ENCODE measurements at regions of chr2 and their contacts with region 1.

Region 1: GRCh38 chr2:237864940-237865622 is 5.7 kb downstream of the RAMP1 start:
- DNase-seq: peak; percentile 70
- ATAC-seq: peak; percentile 55
- H3K4me3 ChIP-seq: no peak overlapping the region
- H3K27ac ChIP-seq: peak overlapping the region; percentile 79
- H3K4me1 ChIP-seq: peaks cover 21% of the 10 kb centered on the region
- H3K27me3 ChIP-seq: no peaks in the 10 kb centered on the region
- CTCF ChIP-seq: no peak
- POLR2A ChIP-seq: no peak
- RAD21 ChIP-seq: no peak

Region 2: DNA sequence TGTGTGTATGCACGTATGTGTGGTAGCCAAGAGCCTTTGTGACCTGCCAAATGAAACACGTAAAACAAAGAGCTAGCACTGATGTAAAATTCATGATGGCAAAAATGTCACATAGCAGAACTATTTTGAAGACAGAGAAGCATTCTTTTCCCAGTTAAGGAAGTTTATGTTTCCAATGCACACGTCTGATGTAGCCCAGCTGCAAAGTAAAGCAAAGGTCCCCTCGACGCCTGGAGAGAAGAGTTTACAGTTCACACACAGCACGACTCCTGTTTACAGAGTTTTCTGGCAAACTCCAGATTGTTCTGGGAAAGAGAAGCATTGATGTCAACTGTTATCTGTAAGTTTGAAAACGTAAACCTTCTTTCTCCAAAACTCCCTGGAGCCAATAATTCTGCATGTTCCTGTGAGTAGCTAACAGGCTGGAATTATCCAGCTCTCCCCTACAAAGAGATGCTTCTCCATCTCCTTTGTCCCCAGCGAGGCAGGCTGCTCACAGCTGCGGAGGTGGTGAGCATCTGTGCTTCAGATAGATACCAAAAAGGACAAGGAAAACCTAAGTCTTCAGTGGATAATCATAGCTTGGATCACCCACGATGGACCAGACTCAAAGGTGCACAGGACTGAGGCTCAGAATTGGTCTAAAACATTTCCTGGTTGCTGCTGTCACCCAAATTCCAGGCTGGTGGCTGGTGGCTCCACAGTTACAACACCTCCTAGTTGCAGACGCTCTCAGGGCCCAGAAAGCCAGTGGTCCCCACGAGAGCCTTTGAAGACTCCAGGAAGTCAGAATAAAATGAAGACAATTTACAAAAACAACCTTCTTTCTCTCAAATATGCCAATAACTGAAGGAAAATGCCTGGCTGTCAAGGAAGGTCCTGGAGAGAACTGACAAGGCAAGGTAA is 538.6 kb before region 1 on chr2:
- CTCF ChIA-PET with region 1: no interaction called
- POLR2A ChIA-PET with region 1: no interaction called
- dilution Hi-C with region 1: no loop called
- in situ Hi-C with region 1: no loop called
- intact Hi-C with region 1: no loop called
- DNase-seq: peak; percentile 87
- ATAC-seq: peak; percentile 18
- H3K4me3 ChIP-seq: no peak overlapping the region
- H3K27ac ChIP-seq: peak overlapping the region; percentile 88
- H3K4me1 ChIP-seq: peaks cover 33% of the 10 kb centered on the region
- H3K27me3 ChIP-seq: no peaks in the 10 kb centered on the region
- CTCF ChIP-seq: no peak
- POLR2A ChIP-seq: no peak
- RAD21 ChIP-seq: no peak

Region 3: GRCh38 chr2:238282861-238283738 is 418.0 kb after region 1 on chr2:
- CTCF ChIA-PET with region 1: no interaction called
- POLR2A ChIA-PET with region 1: interaction called, 19 read pairs
- dilution Hi-C with region 1: no loop called
- in situ Hi-C with region 1: no loop called
- intact Hi-C with region 1: no loop called
- DNase-seq: no peak
- ATAC-seq: no peak
- H3K4me3 ChIP-seq: no peak overlapping the region
- H3K27ac ChIP-seq: no peak overlapping the region
- H3K4me1 ChIP-seq: peaks cover 23% of the 10 kb centered on the region
- H3K27me3 ChIP-seq: no peaks in the 10 kb centered on the region
- CTCF ChIP-seq: no peak
- POLR2A ChIP-seq: no peak
- RAD21 ChIP-seq: no peak

Measured in IMR-90 (cell line).